ENCODE measurements at regions of chr19 and their contacts with region 1.

Region 1: GRCh38 chr19:39435499-39436349 is at the start of gene RPS16:
- DNase-seq: peak; percentile 66
- H3K4me3 ChIP-seq: peak within 1 kb of the TSS; percentile 98
- H3K27me3 ChIP-seq: no peaks in the 10 kb centered on the region
- CTCF ChIP-seq: no peak
- polyA plus RNA-seq, gene RPS16: 2,401 and 2,896 TPM in 2 replicates

Region 2: DNA sequence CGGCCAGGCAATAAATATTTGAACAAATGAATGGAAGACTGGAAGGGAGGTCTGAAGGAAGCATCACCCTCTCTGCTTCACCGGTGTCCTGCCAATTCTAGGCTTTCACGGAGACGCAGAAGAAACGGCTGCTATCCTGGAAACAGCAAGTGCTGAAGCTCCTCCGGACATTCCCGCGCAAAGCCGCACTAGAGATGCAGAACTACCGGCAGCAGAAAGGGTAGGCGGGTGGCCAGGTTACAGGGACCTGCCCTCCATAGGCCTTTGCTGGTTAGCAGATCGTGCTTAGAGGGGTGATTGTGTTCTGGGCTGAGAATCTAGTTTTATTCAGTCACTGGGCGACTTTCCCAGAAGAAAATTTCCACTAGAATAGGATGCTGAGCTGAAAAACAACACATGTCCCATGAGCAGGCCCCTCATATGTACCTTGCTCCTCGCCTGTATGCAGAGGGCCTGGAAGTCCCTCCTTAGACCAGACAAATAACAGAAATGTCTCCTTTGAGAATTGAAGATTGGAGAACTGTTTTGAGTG is 55.8 kb before region 1 on chr19:
- CTCF ChIA-PET with region 1: no interaction called
- POLR2A ChIA-PET with region 1: no interaction called
- DNase-seq: no peak
- H3K4me3 ChIP-seq: no peak overlapping the region
- H3K27me3 ChIP-seq: no peaks in the 10 kb centered on the region
- CTCF ChIP-seq: no peak

Region 3: GRCh38 chr19:39390755-39391592 is 44.8 kb before region 1 on chr19 and contains the starts of genes MED29 and PAF1:
- CTCF ChIA-PET with region 1: no interaction called
- POLR2A ChIA-PET with region 1: interaction called, 11 read pairs
- DNase-seq: peak; percentile 99
- H3K4me3 ChIP-seq: peak within 1 kb of the TSS; percentile 100
- H3K27me3 ChIP-seq: no peaks in the 10 kb centered on the region
- CTCF ChIP-seq: 0 out of 2 replicates have a peak, but pooled peaks have one; percentile 4
- polyA plus RNA-seq, gene MED29: 28.5 and 36.6 TPM in 2 replicates
- polyA plus RNA-seq, gene PAF1: 50.2 and 51.8 TPM in 2 replicates

Region 4: DNA sequence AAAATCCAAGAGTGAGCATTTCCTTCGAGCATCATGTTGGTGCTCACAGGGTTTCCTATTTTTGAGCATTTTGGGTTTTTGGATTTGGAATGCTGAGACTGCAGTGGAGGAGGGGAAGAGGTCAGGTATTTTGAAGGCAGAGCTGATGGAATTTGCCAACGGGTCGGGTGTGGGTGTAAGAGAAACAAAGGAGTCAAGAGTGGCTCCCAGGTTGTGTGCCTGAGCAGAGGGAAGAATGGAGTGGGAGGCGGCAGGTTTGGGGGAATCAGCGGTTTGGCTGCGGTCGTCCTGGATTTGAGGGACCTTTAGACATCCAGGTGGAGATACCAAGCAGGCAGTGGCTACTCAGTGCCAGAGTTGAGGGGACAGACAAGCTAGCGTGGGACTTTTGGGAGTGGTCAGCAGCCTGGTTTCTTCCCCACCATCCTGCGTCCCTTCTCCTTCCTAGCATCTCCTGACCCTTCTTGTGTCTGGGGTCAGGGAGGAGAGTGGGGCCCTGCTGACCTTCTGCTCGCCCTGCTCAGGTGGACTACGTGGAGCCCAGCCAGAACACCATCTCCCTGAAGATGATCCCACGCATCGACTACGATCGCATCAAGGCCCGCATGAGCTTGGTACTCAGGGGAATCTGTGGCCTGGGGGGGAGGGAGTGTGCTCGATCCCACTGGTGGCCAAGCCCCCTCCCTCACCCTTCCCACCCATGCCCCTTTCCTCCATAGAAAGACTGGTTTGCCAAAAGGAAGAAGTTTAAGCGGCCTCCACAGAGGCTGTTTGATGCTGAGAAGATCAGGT is 30.4 kb after region 1 on chr19:
- CTCF ChIA-PET with region 1: no interaction called
- POLR2A ChIA-PET with region 1: no interaction called
- DNase-seq: no peak
- H3K4me3 ChIP-seq: no peak overlapping the region
- H3K27me3 ChIP-seq: no peaks in the 10 kb centered on the region
- CTCF ChIP-seq: no peak